ENCODE measurements at regions of chr9 and their contacts with region 1.

Region 1: GRCh38 chr9:114155263-114155972 is at the start of gene COL27A1:
- DNase-seq: peak; percentile 93
- ATAC-seq: peak; percentile 91
- total RNA-seq, gene COL27A1: 42.4 TPM

Region 2: DNA sequence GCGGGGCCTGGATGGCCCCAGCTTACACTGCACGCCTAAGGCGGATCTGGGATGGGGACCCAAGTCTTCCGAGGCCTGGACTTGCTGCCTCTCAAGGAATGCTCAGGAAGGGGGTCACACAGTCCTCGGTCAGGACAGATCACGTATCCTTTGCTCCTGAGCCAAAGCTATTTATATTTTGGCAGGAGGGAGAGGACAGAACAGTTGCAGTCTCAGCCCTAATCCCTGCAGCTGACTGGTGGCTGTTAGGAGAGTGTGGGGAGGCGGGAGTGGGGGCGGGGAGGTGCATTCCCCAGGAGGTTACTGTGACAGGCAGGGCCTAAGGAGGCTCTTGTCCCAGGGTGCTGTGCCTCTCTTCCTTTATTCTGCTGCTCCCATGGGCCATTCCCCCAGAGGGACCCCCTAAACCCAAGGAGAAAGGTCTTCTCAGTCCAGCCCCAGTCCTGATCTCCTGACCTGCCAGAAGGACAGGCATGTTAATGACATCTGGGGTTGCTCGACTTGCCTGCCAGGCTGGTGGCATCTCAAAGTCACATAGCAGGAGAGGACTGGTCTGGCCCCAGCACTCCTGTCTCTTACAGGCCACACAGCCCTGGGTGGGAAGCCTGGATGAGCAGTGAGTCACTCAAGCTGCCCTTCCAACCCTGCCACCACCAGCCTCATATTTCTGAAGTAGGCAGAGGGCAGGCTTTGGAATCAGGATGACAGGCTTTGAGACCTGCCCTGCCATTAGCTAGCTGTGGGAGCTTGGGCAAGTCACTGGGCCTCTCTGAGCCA is 51.8 kb after region 1 on chr9:
- intact Hi-C with region 1: loop called (anchors 10 kb)
- DNase-seq: no peak
- ATAC-seq: no peak

Region 3: DNA sequence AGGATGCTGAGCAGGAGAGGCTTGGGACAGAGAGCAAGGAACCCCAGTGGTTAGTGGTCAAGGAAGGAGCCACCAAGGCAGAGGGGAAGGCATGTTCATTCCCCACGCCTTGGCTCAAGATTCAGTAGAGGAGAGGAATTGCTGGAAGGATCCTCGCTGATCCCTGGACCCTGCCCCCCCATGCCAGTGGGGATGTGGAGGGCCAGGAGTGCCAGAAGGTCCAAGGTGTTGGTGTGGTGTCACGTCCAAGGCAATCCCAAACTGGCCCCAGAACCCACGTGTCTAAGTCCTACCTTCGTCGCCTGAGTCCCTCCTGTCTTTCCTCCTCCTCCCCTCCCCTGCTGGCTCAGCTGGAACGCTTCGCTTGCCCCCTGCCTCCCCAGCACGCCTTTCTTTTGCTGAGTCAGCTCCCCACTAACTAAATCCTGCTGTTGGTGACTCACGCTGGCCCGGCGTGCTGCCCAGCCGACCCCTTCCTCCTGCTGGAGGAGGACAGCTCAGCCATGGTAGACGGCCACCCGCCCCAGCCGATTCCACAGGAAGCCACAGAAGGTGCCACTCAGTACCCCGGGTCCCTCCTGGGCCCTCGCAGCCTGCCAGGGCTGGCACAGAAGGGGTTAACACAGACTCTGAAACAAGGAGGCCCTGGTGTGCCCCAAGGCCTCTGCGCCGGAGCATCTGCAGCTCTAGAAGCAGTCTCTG is 129.9 kb after region 1 on chr9:
- intact Hi-C with region 1: loop called (anchors 5 kb)
- DNase-seq: peak; percentile 58
- ATAC-seq: no peak

Measured in sciatic nerve (tissue), 2 donors.